K562 (cell line): ENCODE measurements at regions of chr7 and their contacts with region 1.

Region 1: DNA sequence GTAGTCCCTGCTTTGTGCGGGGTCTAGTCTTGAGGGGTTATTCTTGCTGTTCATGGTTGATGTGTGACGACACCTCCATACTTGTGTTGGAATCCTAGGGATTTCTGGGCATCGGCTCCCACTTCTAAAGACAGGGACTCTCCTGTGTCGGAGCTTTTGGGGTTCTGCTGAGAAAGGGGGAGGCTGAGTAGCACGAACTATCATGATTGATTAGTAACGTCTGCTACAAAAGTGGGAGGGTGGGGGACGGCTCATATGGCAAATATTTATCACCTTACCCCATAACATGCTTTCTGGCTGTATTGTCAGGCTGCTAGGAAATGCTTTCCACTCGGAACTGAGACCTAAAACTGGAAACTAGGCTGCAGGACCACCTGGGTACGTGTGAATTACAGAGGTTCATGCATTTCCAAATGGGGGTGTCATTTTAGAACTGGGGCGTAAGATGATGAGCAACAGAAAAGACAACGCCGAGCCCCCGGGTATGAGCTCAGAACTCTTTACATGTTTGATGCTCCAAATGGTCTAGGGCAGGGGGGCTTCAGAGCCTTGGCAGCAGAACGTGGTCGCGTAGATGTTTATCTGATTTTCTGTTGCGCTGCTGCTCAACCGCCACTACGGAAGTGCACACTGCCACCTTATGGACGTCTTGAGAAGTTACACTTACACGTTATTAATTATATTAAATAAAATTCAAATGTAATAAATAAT is 15.1 kb upstream of the NME8 start:
- DNase-seq: peak; percentile 39 to 56 (median 50)
- ATAC-seq: peak; percentile 53; the same call in 2 of the 3 replicates
- H3K4me3 ChIP-seq: peak overlapping the region; percentile 29
- H3K27ac ChIP-seq: no peak overlapping the region
- H3K4me1 ChIP-seq: no peaks in the 10 kb centered on the region; a peak in 1 of 5 replicates
- H3K27me3 ChIP-seq: 0 out of 5 replicates have a peak, but pooled peaks cover 0 to 4% of the 10 kb centered on the region in 2 experiments
- CTCF ChIP-seq: peak; percentile 65 to 73 (median 68)
- EP300 ChIP-seq: no peak
- POLR2A ChIP-seq: no peak
- RAD21 ChIP-seq: peak; percentile 69 to 79

Region 2: GRCh38 chr7:37234928-37235327 is 598.3 kb before region 1 on chr7:
- CTCF ChIA-PET with region 1: no interaction called
- POLR2A ChIA-PET with region 1: no interaction called
- in situ Hi-C with region 1: loop called (anchors 25 kb)
- intact Hi-C with region 1: loop called (anchors 10 kb)
- DNase-seq: peak in 1 of 4 experiments; percentile 9
- ATAC-seq: no peak
- H3K4me3 ChIP-seq: no peak overlapping the region
- H3K27ac ChIP-seq: no peak overlapping the region
- H3K4me1 ChIP-seq: no peaks in the 10 kb centered on the region
- H3K27me3 ChIP-seq: peaks cover 0 to 4% of the 10 kb centered on the region in 2 experiments; a peak in 2 of 5 replicates
- CTCF ChIP-seq: peak; percentile 29 to 57 (median 44); a peak in 4 of 6 replicates
- EP300 ChIP-seq: no peak
- POLR2A ChIP-seq: no peak
- RAD21 ChIP-seq: peak; percentile 52 to 54

Region 3: GRCh38 chr7:37504801-37505200 is 328.5 kb before region 1 on chr7:
- CTCF ChIA-PET with region 1: no interaction called
- POLR2A ChIA-PET with region 1: no interaction called
- in situ Hi-C with region 1: no loop called
- intact Hi-C with region 1: loop called (anchors 10 kb)
- DNase-seq: no peak
- ATAC-seq: no peak
- H3K4me3 ChIP-seq: no peak overlapping the region
- H3K27ac ChIP-seq: no peak overlapping the region
- H3K4me1 ChIP-seq: no peaks in the 10 kb centered on the region
- H3K27me3 ChIP-seq: no peaks in the 10 kb centered on the region
- CTCF ChIP-seq: no peak
- EP300 ChIP-seq: no peak
- POLR2A ChIP-seq: no peak
- RAD21 ChIP-seq: no peak